Ascending aorta (tissue), 2 donors: ENCODE measurements at regions of chr2 and their contacts with region 1.

Region 1: GRCh38 chr2:105757433-105757832 is 12.7 kb downstream of the NCK2 start:
- DNase-seq: no peak
- H3K4me3 ChIP-seq: no peak overlapping the region
- H3K27ac ChIP-seq: no peak overlapping the region
- H3K4me1 ChIP-seq: peaks cover 2 to 8% of the 10 kb centered on the region in 2 donors
- H3K27me3 ChIP-seq: no peaks in the 10 kb centered on the region
- CTCF ChIP-seq: no peak

Region 2: DNA sequence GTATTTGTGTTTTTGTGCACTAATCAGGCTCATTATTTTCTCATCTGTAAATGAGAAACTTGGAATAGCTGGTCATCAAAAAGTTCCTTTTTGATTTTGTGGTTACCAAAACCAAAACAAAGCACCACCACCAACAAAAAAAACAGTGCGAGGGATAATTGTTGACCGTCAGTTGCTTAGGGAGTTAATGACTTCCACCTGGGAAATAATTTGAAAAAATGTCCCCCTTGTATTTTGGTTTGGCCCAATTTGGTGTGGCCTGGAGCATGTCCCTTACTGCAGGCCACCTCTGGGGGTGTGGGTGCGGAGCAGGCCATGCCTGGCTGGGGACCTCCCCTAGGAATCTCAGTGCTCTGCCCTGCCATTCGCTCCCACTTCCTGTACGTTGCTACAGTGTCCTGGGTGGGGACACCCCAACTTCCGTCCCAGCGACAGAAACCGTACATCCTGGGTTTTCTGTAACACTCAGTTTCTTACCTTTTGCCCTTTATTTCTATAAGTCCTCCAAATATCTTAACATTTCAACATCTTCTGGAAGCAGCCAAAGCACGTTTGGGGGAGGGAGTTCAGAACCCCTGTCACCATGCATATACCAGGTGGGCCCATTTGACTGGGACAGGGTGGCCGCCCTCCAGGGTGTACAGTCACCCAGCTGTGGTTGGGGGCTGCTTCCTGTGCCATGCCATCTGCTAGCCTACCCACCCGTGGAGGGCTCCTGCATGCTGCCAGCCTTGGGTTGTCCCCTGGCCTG is 18.6 kb after region 1 on chr2:
- intact Hi-C with region 1: loop called (anchors 2 kb)
- DNase-seq: no peak
- H3K4me3 ChIP-seq: no peak overlapping the region
- H3K27ac ChIP-seq: no peak overlapping the region
- H3K4me1 ChIP-seq: peaks cover 2 to 23% of the 10 kb centered on the region in 2 donors
- H3K27me3 ChIP-seq: no peaks in the 10 kb centered on the region
- CTCF ChIP-seq: no peak